HCT116 (cell line): ENCODE measurements at regions of chr12 and their contacts with region 1.

Region 1: GRCh38 chr12:5096241-5096935 is 52.7 kb downstream of the KCNA5 start:
- DNase-seq: peak; percentile 4
- ATAC-seq: peak; percentile 78
- H3K4me3 ChIP-seq: no peak overlapping the region
- H3K27ac ChIP-seq: no peak overlapping the region
- H3K4me1 ChIP-seq: 0 out of 4 replicates have a peak, but pooled peaks cover 0 to 5% of the 10 kb centered on the region in 2 experiments
- H3K27me3 ChIP-seq: peaks cover 72% of the 10 kb centered on the region
- CTCF ChIP-seq: 0 out of 6 replicates have a peak, but pooled peaks of 1 of the 3 experiments have one; percentile 16
- POLR2A ChIP-seq: no peak
- RAD21 ChIP-seq: peak; percentile 50

Region 2: DNA sequence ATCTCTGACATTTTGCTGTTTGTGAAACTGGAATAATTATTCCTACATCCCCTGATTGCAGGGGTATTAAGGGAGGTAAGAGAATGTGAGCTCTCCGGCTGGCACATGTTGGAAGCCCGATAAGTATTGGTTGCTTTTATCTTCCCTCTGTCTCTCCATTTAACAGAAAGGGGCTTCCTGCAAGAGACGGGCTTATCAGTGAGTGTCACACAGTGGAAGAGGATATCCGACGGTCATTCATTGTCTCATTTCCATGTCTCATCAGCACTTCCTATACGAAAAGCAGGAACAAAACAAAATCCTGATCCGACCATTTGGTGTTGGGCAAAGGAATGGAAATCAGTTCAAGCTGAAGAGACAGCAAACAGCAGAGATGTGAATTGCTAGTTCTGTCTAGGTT is 523.7 kb before region 1 on chr12:
- CTCF ChIA-PET with region 1: no interaction called
- POLR2A ChIA-PET with region 1: no interaction called
- RAD21 ChIA-PET with region 1: no interaction called
- intact Hi-C with region 1: no loop called
- DNase-seq: no peak
- ATAC-seq: no peak
- H3K4me3 ChIP-seq: no peak overlapping the region
- H3K27ac ChIP-seq: no peak overlapping the region
- H3K4me1 ChIP-seq: no peaks in the 10 kb centered on the region
- H3K27me3 ChIP-seq: no peaks in the 10 kb centered on the region
- CTCF ChIP-seq: no peak
- POLR2A ChIP-seq: no peak
- RAD21 ChIP-seq: no peak

Region 3: DNA sequence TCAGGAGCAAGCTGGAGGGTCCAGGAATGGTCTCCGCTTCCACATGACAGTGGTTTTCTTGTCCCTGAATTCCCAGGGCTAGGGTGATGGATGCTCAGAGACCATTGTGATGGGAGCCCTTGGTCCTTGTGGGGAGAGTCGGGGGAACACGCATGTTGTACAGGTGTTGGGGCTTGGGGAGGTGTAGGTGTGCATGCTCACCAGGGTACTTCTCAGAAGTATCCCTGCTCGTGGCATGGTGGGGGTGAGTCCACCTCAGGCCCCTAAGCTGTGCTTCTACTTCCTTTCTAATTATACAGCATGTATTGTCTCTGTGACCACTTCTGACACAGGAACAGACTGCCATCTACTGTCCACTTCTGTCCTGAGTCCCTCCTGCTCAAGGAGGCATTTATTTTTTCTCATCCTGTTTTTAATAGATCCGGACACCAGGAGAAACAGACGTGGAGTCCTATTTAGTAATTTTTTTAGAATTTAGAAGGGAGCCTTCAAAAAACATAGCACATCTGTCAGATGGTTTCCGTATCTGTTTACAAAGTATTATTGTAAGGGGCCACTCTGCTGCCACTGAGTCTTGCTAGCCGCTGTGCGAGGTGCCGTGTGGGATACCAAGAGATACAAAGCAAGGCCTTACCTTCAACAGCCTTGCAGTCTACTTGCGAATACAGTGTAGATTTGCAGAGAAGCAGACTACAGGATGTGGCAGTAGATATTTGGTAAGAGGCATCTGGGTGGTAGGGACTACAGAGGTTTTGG is 346.0 kb after region 1 on chr12:
- CTCF ChIA-PET with region 1: no interaction called
- POLR2A ChIA-PET with region 1: no interaction called
- RAD21 ChIA-PET with region 1: no interaction called
- intact Hi-C with region 1: loop called (anchors 2 kb)
- DNase-seq: peak; percentile 39
- ATAC-seq: peak; percentile 90
- H3K4me3 ChIP-seq: no peak overlapping the region
- H3K27ac ChIP-seq: no peak overlapping the region
- H3K4me1 ChIP-seq: peaks cover 0 to 13% of the 10 kb centered on the region in 2 experiments; a peak in 3 of 4 replicates
- H3K27me3 ChIP-seq: peaks cover 44% of the 10 kb centered on the region
- CTCF ChIP-seq: peak; percentile 64 to 76 (median 75)
- POLR2A ChIP-seq: no peak
- RAD21 ChIP-seq: peak; percentile 85

Region 4: GRCh38 chr12:5556039-5556614 is 459.7 kb after region 1 on chr12:
- CTCF ChIA-PET with region 1: no interaction called
- POLR2A ChIA-PET with region 1: no interaction called
- RAD21 ChIA-PET with region 1: no interaction called
- intact Hi-C with region 1: loop called (anchors 5 kb)
- DNase-seq: peak; percentile 6
- ATAC-seq: peak; percentile 98
- H3K4me3 ChIP-seq: no peak overlapping the region
- H3K27ac ChIP-seq: no peak overlapping the region
- H3K4me1 ChIP-seq: no peaks in the 10 kb centered on the region
- H3K27me3 ChIP-seq: peaks cover 6% of the 10 kb centered on the region
- CTCF ChIP-seq: peak; percentile 19 to 85 (median 82); a peak in 4 of 6 replicates
- POLR2A ChIP-seq: no peak
- RAD21 ChIP-seq: peak; percentile 36; the same call in 1 of the 2 replicates